ENCODE measurements at regions of chr21 and their contacts with region 1.

Region 1: DNA sequence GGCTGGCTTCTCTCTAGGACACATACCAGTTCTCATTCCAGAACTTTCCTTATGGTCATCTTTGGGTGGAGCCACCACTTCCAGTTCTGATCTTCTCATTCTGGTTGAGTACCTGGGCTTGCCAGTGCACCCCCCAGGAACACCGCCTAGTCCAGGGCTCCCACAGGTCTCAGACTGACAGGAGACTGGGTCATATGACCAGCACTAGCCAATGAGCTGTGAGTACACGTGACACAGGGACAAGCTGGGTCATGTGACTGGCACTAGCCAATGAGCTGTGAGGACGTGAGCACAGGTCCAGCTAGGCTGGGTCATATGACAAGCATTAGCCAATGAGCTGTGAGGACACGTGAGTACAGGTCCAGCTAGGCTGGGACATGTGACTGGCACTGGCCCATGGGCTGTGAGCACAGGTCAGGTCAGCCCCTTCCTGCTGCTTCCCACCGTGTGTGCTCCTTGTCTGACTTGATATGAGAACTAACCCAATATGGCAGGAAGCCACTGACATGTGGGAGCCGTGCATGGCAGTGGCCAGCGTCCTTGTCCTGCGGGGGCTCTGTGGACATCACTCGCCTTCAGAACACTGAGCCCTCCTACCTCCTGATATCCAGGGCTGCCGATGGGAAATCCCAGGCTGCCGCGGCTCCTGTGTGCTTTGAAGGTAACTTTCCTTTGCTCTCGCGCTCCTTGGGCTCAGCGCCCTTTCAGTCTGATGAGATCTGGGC is 22.7 kb downstream of the KRTAP10-1 start:
- DNase-seq: peak; percentile 98
- ATAC-seq: peak; percentile 98
- H3K4me3 ChIP-seq: peak overlapping the region; percentile 65 to 66
- H3K27ac ChIP-seq: peak overlapping the region; percentile 38; the same call in 1 of the 2 replicates
- H3K4me1 ChIP-seq: peaks cover 3 to 13% of the 10 kb centered on the region in 2 experiments; a peak in 2 of 4 replicates
- H3K27me3 ChIP-seq: no peaks in the 10 kb centered on the region
- CTCF ChIP-seq: no peak
- POLR2A ChIP-seq: peak; percentile 43
- RAD21 ChIP-seq: no peak

Region 2: DNA sequence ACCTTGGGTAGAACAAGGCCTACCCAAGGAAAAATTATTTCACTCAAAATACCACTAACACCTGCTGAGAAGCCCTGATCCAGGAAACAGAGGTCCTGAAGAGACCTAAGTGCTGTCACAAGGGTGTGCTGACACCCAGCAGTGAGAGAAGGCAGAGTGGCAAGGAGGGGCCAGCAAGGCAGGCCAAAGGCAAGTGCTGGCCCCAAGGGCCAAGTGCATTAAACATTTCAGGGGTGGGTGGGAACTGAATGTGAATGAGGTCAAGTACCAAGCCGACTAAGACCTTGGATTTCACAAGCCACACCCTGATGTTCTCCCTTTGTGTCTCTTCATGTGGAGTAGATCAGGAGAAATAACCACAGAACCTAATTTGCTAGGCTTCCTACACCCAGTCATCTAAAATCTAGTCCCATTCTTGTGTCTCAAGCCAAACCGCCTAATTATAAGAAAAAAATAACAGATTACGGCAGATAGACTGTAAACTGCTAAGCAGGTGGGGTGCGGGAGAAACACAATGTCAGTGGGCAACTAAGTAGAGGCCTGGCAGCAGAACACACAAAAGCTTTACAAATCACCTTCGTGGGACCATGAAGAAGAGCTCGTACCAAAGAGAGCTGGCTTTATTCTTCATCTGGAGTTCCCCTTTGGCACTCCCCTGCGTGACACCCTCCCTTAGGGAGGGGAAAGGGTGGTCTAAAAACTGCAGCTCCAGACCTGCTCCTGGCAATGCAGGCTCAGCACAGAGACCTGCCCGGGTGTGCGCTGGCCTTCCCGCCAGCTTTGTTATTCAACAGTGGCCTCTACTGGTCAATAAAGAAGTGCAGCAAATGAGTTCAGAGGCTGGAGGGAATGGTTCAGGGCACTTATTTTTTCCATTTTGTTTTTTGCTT is 275.6 kb after region 1 on chr21:
- CTCF ChIA-PET with region 1: interaction called, 11 read pairs
- POLR2A ChIA-PET with region 1: no interaction called
- RAD21 ChIA-PET with region 1: interaction called in 1 of 2 experiments, 3 read pairs
- intact Hi-C with region 1: no loop called
- DNase-seq: peak; percentile 24
- ATAC-seq: peak; percentile 98
- H3K4me3 ChIP-seq: no peak overlapping the region
- H3K27ac ChIP-seq: no peak overlapping the region
- H3K4me1 ChIP-seq: no peaks in the 10 kb centered on the region
- H3K27me3 ChIP-seq: no peaks in the 10 kb centered on the region
- CTCF ChIP-seq: peak; percentile 65 to 79 (median 74); a peak in 5 of 6 replicates
- POLR2A ChIP-seq: no peak
- RAD21 ChIP-seq: peak; percentile 82

Measured in HCT116 (cell line).